ENCODE measurements at regions of chr20 and their contacts with region 1.

Region 1: GRCh38 chr20:48414786-48415185 is 413.0 kb downstream of the PREX1 start:
- DNase-seq: no peak
- H3K4me3 ChIP-seq: no peak overlapping the region
- CTCF ChIP-seq: no peak

Region 2: DNA sequence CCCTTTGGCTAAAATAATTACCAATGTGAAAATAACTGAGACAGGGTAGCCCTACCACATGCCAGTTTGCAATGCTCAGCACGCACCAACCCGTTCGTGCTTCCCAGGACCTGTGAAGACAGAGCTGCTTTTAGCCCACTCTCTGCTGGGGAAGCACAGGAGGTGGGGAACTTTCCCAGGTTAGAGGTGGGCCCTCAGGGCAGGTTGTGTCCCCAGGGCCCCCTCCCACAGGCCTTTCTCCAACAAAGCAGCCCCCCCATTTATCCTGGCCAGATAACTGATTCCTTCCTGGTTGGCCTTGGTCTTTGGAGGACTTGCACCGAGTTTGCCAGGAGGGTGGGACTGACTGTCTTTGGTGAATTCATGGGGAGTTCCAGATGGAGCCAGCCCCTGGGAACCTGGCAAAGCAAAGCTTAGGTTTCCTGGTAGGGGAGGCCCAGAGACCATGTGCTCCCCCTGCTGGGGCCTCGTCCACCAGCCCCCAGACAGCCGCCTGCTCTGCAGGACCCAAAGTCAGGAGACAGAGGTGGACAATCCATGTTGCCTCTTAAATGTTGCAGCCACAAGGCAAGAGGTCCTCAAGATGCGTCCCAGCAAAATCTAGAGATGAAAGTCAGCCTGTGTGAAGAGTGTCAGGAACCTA is 85.0 kb before region 1 on chr20:
- in situ Hi-C with region 1: loop called (anchors 5 kb)
- DNase-seq: no peak
- H3K4me3 ChIP-seq: no peak overlapping the region
- CTCF ChIP-seq: peak; percentile 29

Region 3: DNA sequence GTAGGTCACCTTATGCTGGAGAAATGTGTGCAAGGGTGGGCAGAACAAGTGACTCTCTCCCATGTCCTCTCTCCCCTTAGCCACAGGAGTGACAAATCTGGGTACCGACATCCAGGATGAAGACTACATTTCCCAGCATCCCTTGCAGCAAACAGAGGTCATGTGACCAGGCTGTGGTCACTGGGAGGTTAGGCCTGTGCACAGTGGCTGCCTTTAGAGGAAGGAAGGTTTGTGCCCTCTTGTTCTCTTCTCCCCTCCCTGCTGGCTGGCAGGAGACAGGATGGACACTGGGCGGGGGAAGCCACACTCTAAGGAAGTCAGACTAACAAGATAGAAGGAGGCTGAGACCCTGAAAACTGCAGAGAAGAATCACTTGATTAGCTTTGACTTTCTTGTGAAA is 52.8 kb after region 1 on chr20:
- in situ Hi-C with region 1: no loop called
- DNase-seq: no peak
- H3K4me3 ChIP-seq: no peak overlapping the region
- CTCF ChIP-seq: no peak

Measured in astrocyte of the cerebellum (primary cell).